ENCODE measurements at regions of chr2 and their contacts with region 1.

Region 1: GRCh38 chr2:31729764-31730092 is 149.0 kb upstream of the SRD5A2 start:
- DNase-seq: peak; percentile 66
- H3K4me3 ChIP-seq: no peak overlapping the region
- H3K27ac ChIP-seq: no peak overlapping the region
- H3K4me1 ChIP-seq: no peaks in the 10 kb centered on the region
- H3K27me3 ChIP-seq: no peaks in the 10 kb centered on the region
- CTCF ChIP-seq: peak; percentile 65 to 81

Region 2: DNA sequence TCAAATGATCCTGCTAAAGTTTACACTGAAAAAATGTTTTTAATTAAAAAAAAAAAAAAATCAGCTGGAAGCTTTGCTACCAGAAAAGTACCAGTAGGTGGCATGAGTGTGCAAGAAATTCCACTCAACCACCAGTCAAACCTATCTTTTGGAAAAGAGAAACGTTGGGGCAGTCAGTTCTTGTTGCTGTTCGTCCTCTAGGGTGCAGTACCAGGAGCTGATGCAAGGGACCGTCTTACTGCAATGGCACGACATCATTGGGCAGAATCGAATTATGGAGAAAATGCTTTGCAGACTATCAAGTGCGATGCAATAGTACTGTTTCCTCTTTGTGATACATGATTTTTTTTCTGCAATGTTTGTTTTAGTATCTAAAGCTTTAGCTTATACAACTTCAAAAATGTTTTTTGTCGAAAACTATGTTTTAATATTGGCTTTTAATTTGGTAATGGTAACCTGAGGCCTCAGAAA is 1564.6 kb before region 1 on chr2:
- CTCF ChIA-PET with region 1: no interaction called
- dilution Hi-C with region 1: no loop called
- in situ Hi-C with region 1: no loop called
- intact Hi-C with region 1: loop called (anchors 10 kb)
- DNase-seq: peak; percentile 80
- H3K4me3 ChIP-seq: no peak overlapping the region
- H3K27ac ChIP-seq: no peak overlapping the region
- H3K4me1 ChIP-seq: peaks cover 5% of the 10 kb centered on the region
- H3K27me3 ChIP-seq: no peaks in the 10 kb centered on the region
- CTCF ChIP-seq: peak; percentile 80 to 91

Region 3: GRCh38 chr2:31233741-31234682 is 495.7 kb before region 1 on chr2 and contains the start of gene EHD3:
- CTCF ChIA-PET with region 1: no interaction called
- dilution Hi-C with region 1: no loop called
- in situ Hi-C with region 1: no loop called
- intact Hi-C with region 1: loop called (anchors 10 kb)
- DNase-seq: peak; percentile 85
- H3K4me3 ChIP-seq: peak within 1 kb of the TSS; percentile 48 to 69 (median 49)
- H3K27ac ChIP-seq: no peak within 1 kb of the TSS
- H3K4me1 ChIP-seq: peaks cover 27% of the 10 kb centered on the region
- H3K27me3 ChIP-seq: no peaks in the 10 kb centered on the region
- CTCF ChIP-seq: peak; percentile 64 to 86
- total RNA-seq, gene EHD3: 39.4 to 53.3 TPM

Region 4: DNA sequence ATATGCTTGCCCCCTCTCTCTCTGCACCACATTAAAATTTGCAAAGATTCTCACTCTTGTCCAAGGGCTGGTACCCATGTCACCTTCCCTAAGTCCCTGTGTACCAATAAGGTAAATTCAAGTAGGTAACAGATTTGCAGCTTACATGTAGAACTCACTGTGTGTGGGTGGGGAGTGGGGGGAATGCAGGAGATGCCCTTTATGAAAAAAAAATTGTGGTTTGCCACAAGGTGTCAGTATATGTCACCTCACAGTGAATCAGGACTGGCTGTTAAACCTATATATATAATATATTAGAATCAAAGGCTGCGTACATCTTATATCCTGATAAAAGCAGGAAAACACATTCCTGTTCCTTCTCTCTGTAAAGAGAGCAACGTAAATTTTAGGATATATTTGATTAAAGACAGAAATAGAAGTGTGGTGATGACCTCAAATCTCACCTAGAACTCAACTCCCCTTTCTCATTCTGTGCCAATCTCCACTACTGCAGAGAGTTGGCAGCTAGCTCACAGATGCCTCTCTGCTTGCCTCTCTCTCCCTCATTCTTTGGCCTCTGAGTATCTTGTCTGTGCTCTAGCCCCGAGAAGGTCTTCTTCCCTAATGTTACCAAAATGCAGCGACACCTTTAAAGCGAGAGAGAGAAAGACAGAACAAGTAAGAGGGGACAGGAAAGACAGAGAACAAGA is 315.7 kb before region 1 on chr2:
- CTCF ChIA-PET with region 1: no interaction called
- dilution Hi-C with region 1: no loop called
- in situ Hi-C with region 1: no loop called
- intact Hi-C with region 1: loop called (anchors 2 kb)
- DNase-seq: no peak
- H3K4me3 ChIP-seq: peak overlapping the region; percentile 32 to 53 (median 38)
- H3K27ac ChIP-seq: peak overlapping the region; percentile 49
- H3K4me1 ChIP-seq: peaks cover 37% of the 10 kb centered on the region
- H3K27me3 ChIP-seq: no peaks in the 10 kb centered on the region
- CTCF ChIP-seq: peak in 1 of 2 donors; percentile 45

Region 5: DNA sequence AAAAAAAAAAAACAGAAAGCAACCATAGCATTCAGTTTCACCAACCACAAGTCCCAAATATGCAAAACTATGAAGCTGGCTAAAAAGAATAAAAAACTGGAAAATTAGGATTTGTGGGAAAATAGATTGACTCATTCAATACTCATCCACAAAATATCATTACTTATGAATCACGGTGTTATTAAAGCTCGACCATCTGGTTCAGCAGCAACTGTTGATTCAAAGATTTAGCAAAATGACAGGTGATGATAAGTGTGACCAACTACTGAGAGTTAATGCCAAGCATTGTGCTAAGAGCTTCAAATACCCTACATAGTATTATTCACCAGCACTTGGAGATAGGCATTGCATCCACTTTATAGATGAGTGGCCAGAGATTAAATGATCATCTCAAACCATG is 289.0 kb before region 1 on chr2:
- CTCF ChIA-PET with region 1: no interaction called
- dilution Hi-C with region 1: no loop called
- in situ Hi-C with region 1: no loop called
- intact Hi-C with region 1: loop called (anchors 10 kb)
- DNase-seq: peak; percentile 92
- H3K4me3 ChIP-seq: no peak overlapping the region
- H3K27ac ChIP-seq: no peak overlapping the region
- H3K4me1 ChIP-seq: peaks cover 6% of the 10 kb centered on the region
- H3K27me3 ChIP-seq: no peaks in the 10 kb centered on the region
- CTCF ChIP-seq: no peak

Region 6: GRCh38 chr2:31523871-31524492 is 205.7 kb before region 1 on chr2:
- CTCF ChIA-PET with region 1: no interaction called
- dilution Hi-C with region 1: no loop called
- in situ Hi-C with region 1: no loop called
- intact Hi-C with region 1: loop called (anchors 1 kb)
- DNase-seq: peak; percentile 46
- H3K4me3 ChIP-seq: no peak overlapping the region
- H3K27ac ChIP-seq: no peak overlapping the region
- H3K4me1 ChIP-seq: no peaks in the 10 kb centered on the region
- H3K27me3 ChIP-seq: no peaks in the 10 kb centered on the region
- CTCF ChIP-seq: peak; percentile 76 to 77